ENCODE measurements at regions of chr11 and their contacts with region 1.

Region 1: DNA sequence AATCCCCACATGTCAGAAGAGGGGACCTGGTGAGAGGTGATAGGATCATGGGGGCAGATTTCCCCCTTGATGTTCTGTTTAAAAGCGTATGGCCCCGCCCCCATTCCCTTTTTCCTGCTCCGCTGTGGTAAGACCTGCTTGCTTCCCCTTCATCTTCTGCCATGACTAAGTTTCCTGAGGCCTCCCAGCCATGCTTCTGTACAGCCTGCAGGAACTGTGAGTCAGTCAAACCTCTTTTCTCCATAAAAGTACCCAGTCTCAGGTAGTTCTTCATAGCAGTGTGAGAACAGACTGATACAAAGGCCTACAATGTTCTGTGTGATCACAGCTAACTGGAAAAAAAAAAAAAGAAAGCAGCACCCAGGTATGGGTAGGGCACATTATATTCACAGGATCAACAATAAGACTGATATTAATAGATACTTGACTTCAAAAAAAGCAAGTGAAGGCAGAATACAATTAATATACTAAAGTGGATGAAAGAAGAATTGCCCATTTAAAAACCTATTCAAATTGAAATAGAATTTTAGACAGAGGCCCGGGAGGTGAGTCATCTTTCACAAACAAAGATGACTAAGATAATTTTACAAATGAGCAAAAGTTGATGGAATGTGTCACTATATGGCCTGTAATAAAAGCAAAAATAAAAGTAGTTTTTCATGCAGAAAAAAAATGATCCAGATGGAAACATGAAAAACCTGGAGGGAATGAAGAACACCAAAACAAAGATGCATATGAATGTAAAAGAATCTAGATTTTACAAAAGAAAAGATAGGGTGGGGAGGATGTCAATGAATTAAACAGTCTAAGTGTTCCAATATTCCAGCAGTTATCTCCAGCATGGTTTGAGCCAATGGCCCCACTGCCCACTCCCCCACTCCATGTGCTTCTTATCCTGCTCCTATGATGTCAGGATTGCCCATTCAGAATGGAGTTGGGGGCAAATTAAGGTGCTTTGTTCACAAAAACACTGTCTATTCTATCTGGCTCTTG is 1.6 kb upstream of the OR52K1 start:
- DNase-seq: peak; percentile 66
- H3K4me3 ChIP-seq: no peak overlapping the region
- H3K27ac ChIP-seq: peak overlapping the region; percentile 71
- H3K4me1 ChIP-seq: peaks cover 21% of the 10 kb centered on the region
- H3K27me3 ChIP-seq: peaks cover 0 to 1% of the 10 kb centered on the region in 2 experiments
- CTCF ChIP-seq: no peak
- POLR2A ChIP-seq: no peak

Region 2: DNA sequence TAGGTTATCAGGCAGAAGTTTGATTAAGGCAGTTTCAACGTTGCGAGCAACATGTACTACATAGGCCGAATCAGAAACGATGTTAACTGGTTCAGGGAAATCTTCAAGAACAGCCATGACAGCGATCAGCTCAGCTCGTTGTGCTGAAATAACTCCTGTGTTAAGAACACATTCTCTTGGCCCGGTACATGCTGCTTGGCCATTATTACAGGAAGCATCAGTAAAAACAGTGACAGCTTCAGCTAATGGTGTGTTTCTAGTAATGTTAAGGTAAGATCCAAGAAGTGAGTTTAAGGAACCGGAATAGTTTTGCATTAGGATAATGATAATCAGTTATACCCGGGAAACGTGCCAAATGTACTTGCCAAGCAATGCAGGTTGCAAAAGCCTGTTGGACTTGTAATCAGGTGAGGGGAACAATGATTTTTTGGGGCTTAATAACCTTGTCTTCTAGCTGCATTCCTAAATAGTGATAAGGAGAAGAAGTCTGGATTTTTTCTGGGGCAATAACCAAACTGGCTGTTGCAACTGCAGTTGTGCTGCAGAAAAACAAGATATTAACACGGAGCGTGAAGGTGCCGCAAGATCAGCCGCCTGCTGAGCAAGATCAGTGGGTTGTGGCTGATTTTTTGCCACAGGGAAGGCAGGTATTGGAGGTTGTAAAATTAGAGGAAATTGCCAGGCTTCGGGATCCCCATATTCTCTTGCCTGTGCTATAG is 15.8 kb after region 1 on chr11:
- CTCF ChIA-PET with region 1: interaction called, 10 read pairs
- POLR2A ChIA-PET with region 1: no interaction called
- dilution Hi-C with region 1: no loop called
- intact Hi-C with region 1: no loop called
- DNase-seq: no peak
- H3K4me3 ChIP-seq: no peak overlapping the region
- H3K27ac ChIP-seq: no peak overlapping the region
- H3K4me1 ChIP-seq: no peaks in the 10 kb centered on the region
- H3K27me3 ChIP-seq: peaks cover 18 to 23% of the 10 kb centered on the region in 2 experiments
- CTCF ChIP-seq: no peak
- POLR2A ChIP-seq: no peak

Region 3: GRCh38 chr11:4607781-4608666 is 127.2 kb after region 1 on chr11 and contains the start of gene TRIM68:
- CTCF ChIA-PET with region 1: no interaction called
- POLR2A ChIA-PET with region 1: no interaction called
- dilution Hi-C with region 1: no loop called
- intact Hi-C with region 1: loop called (anchors 5 kb)
- DNase-seq: peak; percentile 95
- H3K4me3 ChIP-seq: peak within 1 kb of the TSS; percentile 59 to 93 (median 88)
- H3K27ac ChIP-seq: peak within 1 kb of the TSS; percentile 83
- H3K4me1 ChIP-seq: peaks cover 10% of the 10 kb centered on the region
- H3K27me3 ChIP-seq: no peaks in the 10 kb centered on the region
- CTCF ChIP-seq: no peak
- POLR2A ChIP-seq: peak; percentile 81
- total RNA-seq, gene TRIM68: 10.6 and 11.3 TPM in 2 replicates

Region 4: DNA sequence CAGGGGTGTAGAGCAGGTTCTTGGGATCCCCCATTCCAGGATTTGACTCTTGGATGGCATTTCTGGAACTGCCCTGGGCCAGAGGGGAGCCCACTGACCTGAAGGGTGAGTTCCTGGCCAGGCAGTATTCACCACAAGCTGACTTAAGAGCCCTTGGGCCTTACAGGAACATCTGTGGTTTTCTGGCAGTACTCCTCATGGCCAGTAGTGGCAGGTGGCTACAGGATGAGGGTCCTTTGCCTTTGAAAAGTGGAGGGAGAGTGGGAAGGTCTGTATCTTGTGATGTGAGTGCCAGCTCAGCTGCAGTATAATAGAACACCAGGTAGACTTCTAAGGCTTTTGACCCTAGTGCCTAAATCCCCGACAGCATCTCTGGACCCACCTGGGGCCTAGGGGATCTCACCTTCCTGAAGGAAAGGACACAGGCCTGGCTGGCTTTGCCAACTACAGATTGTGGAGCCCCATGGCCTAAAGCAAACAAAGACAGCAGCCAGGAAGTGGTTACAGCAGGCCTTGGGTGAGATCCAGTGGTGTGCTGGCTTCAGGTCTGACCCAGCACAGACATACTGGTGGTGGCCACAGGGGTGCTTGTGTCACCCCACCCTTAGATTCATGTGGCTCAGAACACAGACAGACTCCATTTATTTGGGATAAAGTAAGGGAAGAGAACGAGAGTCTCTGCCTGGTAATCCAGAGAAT is 359.1 kb after region 1 on chr11:
- CTCF ChIA-PET with region 1: no interaction called
- POLR2A ChIA-PET with region 1: no interaction called
- dilution Hi-C with region 1: no loop called
- intact Hi-C with region 1: no loop called
- DNase-seq: no peak
- H3K4me3 ChIP-seq: no peak overlapping the region
- H3K27ac ChIP-seq: no peak overlapping the region
- H3K4me1 ChIP-seq: no peaks in the 10 kb centered on the region
- H3K27me3 ChIP-seq: no peaks in the 10 kb centered on the region
- CTCF ChIP-seq: no peak
- POLR2A ChIP-seq: no peak

Measured in endothelial cell of umbilical vein (primary cell).